K562 (cell line): ENCODE measurements at regions of chr21 and their contacts with region 1.

Region 1: GRCh38 chr21:14753466-14754258 is 207.5 kb upstream of the SAMSN1 start:
- DNase-seq: peak; percentile 71 to 99 (median 81)
- ATAC-seq: peak; percentile 69
- H3K4me3 ChIP-seq: peak overlapping the region; percentile 46
- H3K27ac ChIP-seq: peak overlapping the region; percentile 92
- H3K4me1 ChIP-seq: peaks cover 2 to 36% of the 10 kb centered on the region in 2 experiments; a peak in 3 of 5 replicates
- H3K27me3 ChIP-seq: no peaks in the 10 kb centered on the region
- CTCF ChIP-seq: no peak
- EP300 ChIP-seq: peak; percentile 99
- POLR2A ChIP-seq: peak; percentile 81; the same call in 1 of the 2 replicates
- RAD21 ChIP-seq: peak in 1 of 2 experiments; percentile 42; a peak in 2 of 4 replicates

Region 2: GRCh38 chr21:14454016-14455009 is 299.3 kb before region 1 on chr21:
- CTCF ChIA-PET with region 1: no interaction called
- POLR2A ChIA-PET with region 1: no interaction called
- in situ Hi-C with region 1: loop called (anchors 5 kb)
- intact Hi-C with region 1: loop called (anchors 1 kb)
- DNase-seq: peak; percentile 80 to 93 (median 83)
- ATAC-seq: peak; percentile 69
- H3K4me3 ChIP-seq: no peak overlapping the region
- H3K27ac ChIP-seq: peak overlapping the region; percentile 91
- H3K4me1 ChIP-seq: peaks cover 17 to 54% of the 10 kb centered on the region in 2 experiments
- H3K27me3 ChIP-seq: no peaks in the 10 kb centered on the region
- CTCF ChIP-seq: no peak
- EP300 ChIP-seq: peak; percentile 98
- POLR2A ChIP-seq: no peak
- RAD21 ChIP-seq: peak; percentile 3 to 15; a peak in 2 of 4 replicates

Region 3: GRCh38 chr21:14545906-14546480 is 207.7 kb before region 1 on chr21 and contains the start of gene SAMSN1:
- CTCF ChIA-PET with region 1: no interaction called
- POLR2A ChIA-PET with region 1: no interaction called
- in situ Hi-C with region 1: no loop called
- intact Hi-C with region 1: loop called (anchors 2 kb)
- DNase-seq: peak; percentile 52 to 91 (median 74)
- ATAC-seq: peak; percentile 83
- H3K4me3 ChIP-seq: peak within 1 kb of the TSS; percentile 56
- H3K27ac ChIP-seq: peak within 1 kb of the TSS; percentile 76
- H3K4me1 ChIP-seq: peaks cover 0 to 13% of the 10 kb centered on the region in 2 experiments; a peak in 2 of 5 replicates
- H3K27me3 ChIP-seq: no peaks in the 10 kb centered on the region
- CTCF ChIP-seq: no peak
- EP300 ChIP-seq: peak; percentile 88
- POLR2A ChIP-seq: peak; percentile 94
- RAD21 ChIP-seq: peak in 1 of 2 experiments; percentile 37; a peak in 2 of 4 replicates
- polyA plus RNA-seq, gene SAMSN1: 184 to 223 TPM

Region 4: GRCh38 chr21:14602382-14602958 is 151.2 kb before region 1 on chr21:
- CTCF ChIA-PET with region 1: no interaction called
- POLR2A ChIA-PET with region 1: no interaction called
- in situ Hi-C with region 1: no loop called
- intact Hi-C with region 1: loop called (anchors 5 kb)
- DNase-seq: peak in 1 of 4 experiments; percentile 32
- ATAC-seq: peak; percentile 46
- H3K4me3 ChIP-seq: no peak overlapping the region
- H3K27ac ChIP-seq: peak overlapping the region; percentile 39; the same call in 2 of the 3 replicates
- H3K4me1 ChIP-seq: peaks cover 7 to 41% of the 10 kb centered on the region in 2 experiments; a peak in 4 of 5 replicates
- H3K27me3 ChIP-seq: no peaks in the 10 kb centered on the region
- CTCF ChIP-seq: no peak
- EP300 ChIP-seq: no peak
- POLR2A ChIP-seq: no peak
- RAD21 ChIP-seq: no peak

Region 5: GRCh38 chr21:14616303-14617039 is 137.2 kb before region 1 on chr21:
- CTCF ChIA-PET with region 1: no interaction called
- POLR2A ChIA-PET with region 1: no interaction called
- in situ Hi-C with region 1: no loop called
- intact Hi-C with region 1: no loop called
- DNase-seq: no peak
- ATAC-seq: peak; percentile 39; the same call in 2 of the 3 replicates
- H3K4me3 ChIP-seq: no peak overlapping the region
- H3K27ac ChIP-seq: no peak overlapping the region
- H3K4me1 ChIP-seq: peaks cover 0 to 6% of the 10 kb centered on the region in 2 experiments; a peak in 1 of 5 replicates
- H3K27me3 ChIP-seq: no peaks in the 10 kb centered on the region
- CTCF ChIP-seq: no peak
- EP300 ChIP-seq: no peak
- POLR2A ChIP-seq: no peak
- RAD21 ChIP-seq: no peak

Region 6: GRCh38 chr21:15064576-15065391 is 311.1 kb after region 1 on chr21 and contains the start of gene NRIP1:
- CTCF ChIA-PET with region 1: no interaction called
- POLR2A ChIA-PET with region 1: no interaction called
- in situ Hi-C with region 1: no loop called
- intact Hi-C with region 1: loop called (anchors 2 kb)
- DNase-seq: peak; percentile 77 to 91 (median 83)
- ATAC-seq: peak; percentile 81
- H3K4me3 ChIP-seq: peak within 1 kb of the TSS; percentile 80
- H3K27ac ChIP-seq: peak within 1 kb of the TSS; percentile 85
- H3K4me1 ChIP-seq: peaks cover 12% of the 10 kb centered on the region in 2 experiments; a peak in 4 of 5 replicates
- H3K27me3 ChIP-seq: no peaks in the 10 kb centered on the region
- CTCF ChIP-seq: no peak
- EP300 ChIP-seq: no peak
- POLR2A ChIP-seq: peak; percentile 61
- RAD21 ChIP-seq: no peak
- polyA plus RNA-seq, gene NRIP1: 4.3 to 6.3 TPM